Left ventricle myocardium superior (tissue), 1 donor: ENCODE measurements at regions of chr16 and their contacts with region 1.

Region 1: GRCh38 chr16:24041826-24042631 is 206.2 kb downstream of the PRKCB start:
- DNase-seq: peak; percentile 67
- ATAC-seq: peak; percentile 53

Region 2: DNA sequence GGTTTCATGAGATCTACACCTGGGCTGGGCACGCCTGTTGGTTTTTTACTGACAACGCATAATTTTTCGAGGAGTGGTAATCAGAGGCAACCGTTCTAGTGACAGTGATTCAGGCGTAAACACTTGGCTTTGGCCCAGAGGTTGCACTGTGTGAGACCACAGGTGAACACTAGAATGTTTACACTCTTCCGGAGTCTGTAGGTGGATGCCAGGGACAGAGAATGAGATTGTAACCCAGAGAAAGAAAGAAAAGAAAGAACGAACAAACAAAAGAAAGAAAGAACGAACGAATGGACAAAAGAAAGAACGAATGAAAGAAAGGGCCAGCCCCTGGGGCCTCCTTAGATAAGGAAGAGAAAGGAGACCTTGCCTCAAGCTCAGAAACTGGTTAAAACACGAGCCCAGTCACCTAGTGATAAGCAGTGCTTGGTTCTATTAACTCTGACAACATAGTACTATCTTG is 93.0 kb before region 1 on chr16:
- intact Hi-C with region 1: no loop called
- DNase-seq: no peak
- ATAC-seq: no peak

Region 3: DNA sequence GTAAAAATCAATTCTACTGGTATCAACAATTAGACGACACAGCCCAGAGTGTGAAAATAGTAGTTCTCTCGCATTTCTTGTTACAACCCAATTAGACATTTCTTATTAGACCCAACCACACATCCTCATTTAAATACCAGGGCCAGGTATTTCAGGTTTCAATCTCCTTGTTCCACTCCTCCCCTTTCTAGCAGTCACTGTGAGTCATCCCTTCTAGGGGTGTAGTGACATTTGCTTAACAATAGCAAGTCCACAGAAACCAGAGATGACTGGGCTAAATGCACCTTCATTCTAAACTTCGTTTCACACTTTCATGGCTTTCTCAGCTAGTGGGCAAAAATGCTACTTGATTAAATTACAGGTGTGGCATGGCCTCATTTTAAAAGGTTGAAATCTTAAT is 97.3 kb after region 1 on chr16:
- intact Hi-C with region 1: no loop called
- DNase-seq: no peak
- ATAC-seq: no peak

Region 4: GRCh38 chr16:24253192-24253591 is 211.2 kb after region 1 on chr16:
- intact Hi-C with region 1: loop called (anchors 10 kb)
- DNase-seq: peak; percentile 33
- ATAC-seq: peak; percentile 53

Region 5: DNA sequence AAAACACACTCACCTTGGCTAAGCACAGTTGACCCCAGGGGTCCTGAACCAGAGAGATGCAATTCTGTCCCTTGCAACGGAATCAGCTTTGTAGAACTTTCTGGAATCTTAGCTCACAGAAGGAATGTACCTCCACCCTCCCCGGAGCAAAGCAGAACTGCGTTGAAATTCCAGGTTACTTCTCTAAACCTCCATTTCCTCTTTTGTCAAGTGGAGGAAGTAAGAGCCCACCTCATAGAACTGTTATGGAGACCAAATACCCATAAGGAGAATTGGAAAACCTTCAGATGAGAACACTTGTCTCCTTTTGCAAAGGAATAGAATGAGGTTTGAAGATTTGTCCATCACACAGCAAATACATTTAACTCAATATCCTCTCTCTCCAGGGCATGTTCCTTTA is 410.7 kb after region 1 on chr16:
- intact Hi-C with region 1: no loop called
- DNase-seq: no peak
- ATAC-seq: no peak

Region 6: DNA sequence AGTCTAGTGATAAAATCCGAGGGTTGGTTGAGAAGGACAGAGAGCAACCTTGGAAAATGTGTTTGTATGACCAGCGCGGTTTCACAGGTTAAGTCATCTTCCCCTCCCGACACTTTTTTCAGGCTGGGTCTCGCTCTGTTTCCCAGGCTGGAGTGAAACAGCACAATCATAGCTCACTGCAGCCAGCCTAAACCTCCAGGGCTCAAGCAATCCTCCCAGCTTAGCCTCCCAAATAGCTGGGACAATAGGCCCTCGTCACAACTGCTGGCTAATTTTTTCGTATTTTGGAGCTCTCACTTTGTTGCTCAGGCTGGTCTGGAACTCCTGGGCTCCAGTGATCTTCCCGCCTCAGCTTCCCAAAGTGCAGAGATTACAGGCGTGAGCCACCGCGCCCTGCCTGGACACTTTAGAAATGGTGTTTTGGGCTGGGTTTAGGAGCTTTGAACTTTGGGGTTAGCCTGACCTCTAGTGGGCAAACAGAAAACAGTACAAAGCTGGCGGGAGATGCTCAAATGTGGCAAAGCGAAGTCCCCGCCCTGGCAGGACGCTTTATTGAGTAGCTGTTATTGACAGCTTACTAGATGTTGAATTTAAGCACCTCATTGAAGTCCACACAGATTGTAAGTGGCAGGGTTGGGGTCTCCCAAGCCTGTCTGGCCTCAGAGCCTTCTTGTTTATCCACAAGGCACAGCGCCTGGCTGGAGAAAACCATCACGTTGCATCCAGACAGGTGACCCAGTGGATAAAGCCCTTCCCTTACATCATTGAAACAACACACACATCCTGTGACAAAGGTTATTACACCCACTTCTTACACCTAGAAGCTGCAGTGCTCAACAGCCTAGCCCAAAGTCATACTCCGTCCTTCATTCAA is 462.7 kb after region 1 on chr16:
- intact Hi-C with region 1: loop called (anchors 5 kb)
- DNase-seq: peak; percentile 36
- ATAC-seq: peak; percentile 84